ENCODE measurements at regions of chr1 and their contacts with region 1.

Region 1: GRCh38 chr1:180881806-180882509 is 30.7 kb upstream of the KIAA1614 start:
- DNase-seq: peak; percentile 25
- ATAC-seq: peak; percentile 54; the same call in 2 of the 3 replicates
- H3K4me3 ChIP-seq: no peak overlapping the region
- H3K27ac ChIP-seq: no peak overlapping the region
- H3K4me1 ChIP-seq: no peaks in the 10 kb centered on the region
- H3K27me3 ChIP-seq: no peaks in the 10 kb centered on the region; a peak in 1 of 5 replicates
- CTCF ChIP-seq: peak; percentile 71
- EP300 ChIP-seq: no peak
- POLR2A ChIP-seq: no peak
- RAD21 ChIP-seq: peak; percentile 42; the same call in 1 of the 2 replicates

Region 2: DNA sequence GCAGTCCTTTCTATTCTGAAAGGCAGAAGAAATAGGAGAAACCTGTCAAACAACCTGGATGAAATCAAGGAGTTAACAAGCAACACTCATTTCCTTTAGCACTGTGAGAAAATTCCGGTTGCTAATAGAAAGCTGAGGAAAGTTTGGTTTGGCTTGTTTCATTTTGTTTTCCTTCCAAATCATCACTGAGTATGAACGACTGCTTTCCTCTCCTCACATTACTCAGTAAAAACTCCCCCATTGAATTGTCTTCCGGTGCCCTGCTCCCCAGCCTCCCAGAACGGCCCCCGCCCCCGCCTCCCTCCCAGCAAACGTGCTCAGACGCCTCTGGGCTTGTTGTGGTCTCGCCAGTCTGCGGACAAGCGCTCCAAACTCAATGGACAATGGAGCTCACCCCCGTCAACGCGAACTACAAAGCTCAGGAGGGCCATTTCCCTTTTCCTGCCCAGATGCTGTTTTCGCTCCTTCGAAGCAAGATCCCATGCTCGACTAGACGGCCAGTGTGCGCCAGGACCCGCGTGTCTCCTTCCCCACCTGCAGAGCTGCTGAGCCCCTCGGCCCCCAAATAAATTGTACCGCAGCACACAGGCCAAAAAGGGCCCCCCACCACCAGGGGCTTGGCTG is 140.0 kb after region 1 on chr1:
- CTCF ChIA-PET with region 1: no interaction called
- POLR2A ChIA-PET with region 1: no interaction called
- in situ Hi-C with region 1: no loop called
- intact Hi-C with region 1: no loop called
- DNase-seq: peak; percentile 47
- ATAC-seq: peak; percentile 66
- H3K4me3 ChIP-seq: peak overlapping the region; percentile 90 to 94 (median 91)
- H3K27ac ChIP-seq: peak overlapping the region; percentile 77
- H3K4me1 ChIP-seq: peaks cover 43% of the 10 kb centered on the region
- H3K27me3 ChIP-seq: no peaks in the 10 kb centered on the region; a peak in 1 of 5 replicates
- CTCF ChIP-seq: 0 out of 2 replicates have a peak, but pooled peaks have one; percentile 6
- EP300 ChIP-seq: no peak
- POLR2A ChIP-seq: peak in 1 of 2 experiments; percentile 43; a peak in 1 of 4 replicates
- RAD21 ChIP-seq: no peak

Region 3: GRCh38 chr1:181033799-181034451 is 152.0 kb after region 1 on chr1 and contains the start of gene MR1:
- CTCF ChIA-PET with region 1: no interaction called
- POLR2A ChIA-PET with region 1: no interaction called
- in situ Hi-C with region 1: no loop called
- intact Hi-C with region 1: loop called (anchors 10 kb)
- DNase-seq: peak; percentile 78
- ATAC-seq: peak; percentile 90
- H3K4me3 ChIP-seq: peak within 1 kb of the TSS; percentile 59 to 81 (median 66)
- H3K27ac ChIP-seq: peak within 1 kb of the TSS; percentile 27
- H3K4me1 ChIP-seq: peaks cover 40% of the 10 kb centered on the region
- H3K27me3 ChIP-seq: no peaks in the 10 kb centered on the region; a peak in 1 of 5 replicates
- CTCF ChIP-seq: no peak
- EP300 ChIP-seq: no peak
- POLR2A ChIP-seq: no peak
- RAD21 ChIP-seq: no peak
- total RNA-seq, gene MR1: 6.6 and 10.4 TPM in 2 replicates

Region 4: DNA sequence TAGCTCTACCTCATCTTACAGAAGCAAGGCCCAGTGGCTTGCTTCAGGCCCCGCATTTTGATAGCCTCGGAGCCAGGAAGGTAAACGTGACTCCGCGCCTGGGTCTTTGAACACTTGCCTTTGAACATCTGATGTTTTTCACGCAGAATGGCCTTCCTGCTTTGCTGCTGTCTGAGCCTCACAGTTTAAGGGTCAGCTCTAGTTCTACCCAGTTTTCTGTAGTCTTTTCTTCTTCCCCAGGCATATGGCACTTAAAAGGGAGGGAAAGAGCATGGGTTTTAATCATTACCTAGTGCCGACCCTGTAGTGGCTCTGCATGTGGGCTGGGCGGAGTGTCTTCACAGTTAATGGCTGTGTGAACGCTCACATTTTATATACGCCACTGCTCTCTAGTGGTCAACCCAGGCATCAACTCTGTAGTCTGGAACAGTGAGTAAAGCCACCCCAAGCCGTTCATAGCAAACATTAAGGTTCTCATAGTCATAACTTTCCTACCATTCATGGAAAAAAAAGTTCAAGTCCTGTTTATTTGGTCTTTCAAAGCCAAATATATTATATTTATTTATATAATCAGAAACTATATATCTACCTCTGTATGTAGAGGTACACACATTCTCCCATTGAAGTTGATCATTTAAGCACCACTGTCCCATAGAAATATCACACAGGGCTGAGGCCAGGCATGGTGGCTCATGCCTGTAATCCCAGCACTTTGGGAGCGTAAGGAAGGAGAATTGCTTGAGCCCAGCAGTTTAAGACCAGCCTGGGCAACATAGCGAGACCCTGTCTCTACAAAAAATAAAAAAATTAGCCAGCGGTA is 284.6 kb after region 1 on chr1:
- CTCF ChIA-PET with region 1: interaction called, 12 read pairs
- POLR2A ChIA-PET with region 1: no interaction called
- in situ Hi-C with region 1: no loop called
- intact Hi-C with region 1: loop called (anchors 1 kb)
- DNase-seq: peak; percentile 77
- ATAC-seq: peak; percentile 99
- H3K4me3 ChIP-seq: peak overlapping the region in 1 of 3 experiments; percentile 48; a peak in 2 of 6 replicates
- H3K27ac ChIP-seq: no peak overlapping the region
- H3K4me1 ChIP-seq: peaks cover 19% of the 10 kb centered on the region
- H3K27me3 ChIP-seq: no peaks in the 10 kb centered on the region
- CTCF ChIP-seq: peak; percentile 80
- EP300 ChIP-seq: no peak
- POLR2A ChIP-seq: no peak
- RAD21 ChIP-seq: peak; percentile 71

Measured in HepG2 (cell line).